ENCODE measurements at regions of chr10 and their contacts with region 1.

Region 1: DNA sequence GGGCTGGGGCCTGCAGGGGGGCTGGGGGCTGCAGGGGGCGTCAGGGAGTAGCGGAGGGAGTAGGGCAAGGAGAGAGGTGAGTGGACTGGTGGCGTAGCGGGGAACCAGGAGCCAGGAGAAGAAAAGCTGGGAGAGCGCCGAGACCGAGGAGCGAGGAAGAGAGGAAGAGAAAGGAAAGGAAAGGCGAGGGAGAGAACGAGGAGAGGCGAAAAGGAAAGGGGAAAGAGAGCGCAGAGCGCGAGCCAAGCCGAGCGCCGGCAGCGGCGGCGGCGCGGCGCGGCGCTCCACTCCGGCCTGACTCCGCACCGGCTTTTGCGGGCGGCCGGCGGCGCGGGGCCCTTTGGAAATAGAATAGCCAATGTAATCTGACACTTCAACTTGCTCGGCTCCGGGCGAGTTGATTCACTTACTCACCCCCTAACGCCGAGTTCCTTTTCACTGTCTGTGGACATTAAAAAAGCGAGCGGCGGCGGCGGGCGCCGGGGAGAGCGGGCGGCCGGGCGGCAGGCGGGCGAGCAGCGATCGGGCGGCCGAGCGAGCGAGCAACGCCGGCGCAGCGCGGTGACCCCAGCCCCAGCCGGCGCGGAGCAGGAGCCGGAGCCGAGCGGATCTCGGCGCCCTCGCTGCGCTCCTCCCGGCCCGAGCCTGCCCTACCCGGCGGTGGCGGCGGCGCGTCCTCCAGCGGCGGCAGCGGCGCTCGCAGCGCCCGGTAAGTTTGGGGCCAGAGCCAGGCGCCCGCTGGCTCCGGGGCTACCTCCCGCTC is at the start of gene ZMIZ1:
- DNase-seq: peak; percentile 94
- ATAC-seq: peak; percentile 73
- H3K4me3 ChIP-seq: peak within 1 kb of the TSS; percentile 88 to 97
- H3K27ac ChIP-seq: peak within 1 kb of the TSS; percentile 73 to 94
- H3K4me1 ChIP-seq: peaks cover 0 to 2% of the 10 kb centered on the region in 2 donors
- H3K27me3 ChIP-seq: no peaks in the 10 kb centered on the region
- total RNA-seq, gene ZMIZ1: 48.5 to 84.1 TPM

Region 2: GRCh38 chr10:78211561-78212051 is 857.1 kb before region 1 on chr10:
- intact Hi-C with region 1: loop called (anchors 5 to 10 kb)
- DNase-seq: peak in 1 of 2 donors; percentile 65
- ATAC-seq: no peak
- H3K4me3 ChIP-seq: no peak overlapping the region
- H3K27ac ChIP-seq: no peak overlapping the region
- H3K4me1 ChIP-seq: no peaks in the 10 kb centered on the region
- H3K27me3 ChIP-seq: no peaks in the 10 kb centered on the region

Region 3: DNA sequence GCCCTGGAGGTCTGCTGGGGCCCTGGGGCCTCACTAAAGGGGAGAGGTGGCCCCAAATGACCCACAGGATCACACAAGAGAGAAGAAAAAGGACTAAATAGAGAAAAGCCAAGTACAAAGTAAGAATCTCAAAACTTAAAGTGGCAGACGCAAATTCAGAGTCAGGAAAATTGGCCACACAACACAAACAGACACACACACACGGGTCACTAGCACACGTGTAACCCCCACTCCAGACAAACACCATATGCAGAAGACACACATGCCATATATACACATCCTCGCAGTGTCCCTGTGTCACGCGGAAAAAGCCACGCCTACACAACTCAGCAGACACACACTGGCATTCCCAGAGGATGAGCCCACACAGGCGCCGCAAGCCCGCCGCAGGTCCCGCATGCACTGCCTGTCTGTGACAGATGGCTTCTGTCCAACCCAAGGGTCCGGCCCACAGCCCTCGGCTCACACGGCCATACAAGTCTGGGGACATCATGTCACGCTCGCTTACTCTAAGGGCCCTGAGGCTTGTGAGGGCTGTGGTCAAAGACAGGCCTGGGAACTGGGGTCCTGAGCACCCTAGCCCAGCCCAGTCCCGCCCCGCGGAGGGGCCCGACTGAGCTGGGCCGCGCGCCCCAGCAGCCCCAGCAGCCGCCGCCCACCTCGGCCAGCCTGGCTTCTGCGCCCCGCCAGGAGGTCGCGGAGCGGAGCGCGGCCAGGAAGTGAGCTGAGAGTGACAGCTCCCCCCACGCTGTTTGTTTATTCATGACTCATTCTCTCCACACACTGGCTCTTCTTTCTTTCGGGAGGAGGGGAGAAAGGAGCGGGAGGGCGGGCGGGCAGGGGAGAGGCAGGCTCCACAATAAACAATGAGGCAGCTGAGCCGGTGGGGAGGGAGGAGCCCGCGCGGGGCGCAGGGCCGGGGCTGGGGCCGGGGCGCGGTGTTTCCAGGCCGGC is 95.5 kb before region 1 on chr10:
- intact Hi-C with region 1: loop called (anchors 2 to 5 kb)
- DNase-seq: peak; percentile 90 to 91
- ATAC-seq: peak; percentile 72
- H3K4me3 ChIP-seq: peak overlapping the region; percentile 17 to 45
- H3K27ac ChIP-seq: peak overlapping the region; percentile 78 to 88
- H3K4me1 ChIP-seq: peaks cover 0 to 3% of the 10 kb centered on the region in 2 donors
- H3K27me3 ChIP-seq: no peaks in the 10 kb centered on the region

Region 4: GRCh38 chr10:79022565-79023230 is 46.0 kb before region 1 on chr10:
- intact Hi-C with region 1: no loop called
- DNase-seq: peak; percentile 47 to 70
- ATAC-seq: no peak
- H3K4me3 ChIP-seq: no peak overlapping the region
- H3K27ac ChIP-seq: no peak overlapping the region
- H3K4me1 ChIP-seq: no peaks in the 10 kb centered on the region
- H3K27me3 ChIP-seq: no peaks in the 10 kb centered on the region

Region 5: GRCh38 chr10:79149662-79150443 is 81.1 kb after region 1 on chr10:
- intact Hi-C with region 1: loop called (anchors 2 to 5 kb)
- DNase-seq: peak; percentile 85 to 88
- ATAC-seq: peak; percentile 55
- H3K4me3 ChIP-seq: no peak overlapping the region
- H3K27ac ChIP-seq: peak overlapping the region in 1 of 2 donors; percentile 0
- H3K4me1 ChIP-seq: peaks cover 0 to 11% of the 10 kb centered on the region in 2 donors
- H3K27me3 ChIP-seq: no peaks in the 10 kb centered on the region

Region 6: DNA sequence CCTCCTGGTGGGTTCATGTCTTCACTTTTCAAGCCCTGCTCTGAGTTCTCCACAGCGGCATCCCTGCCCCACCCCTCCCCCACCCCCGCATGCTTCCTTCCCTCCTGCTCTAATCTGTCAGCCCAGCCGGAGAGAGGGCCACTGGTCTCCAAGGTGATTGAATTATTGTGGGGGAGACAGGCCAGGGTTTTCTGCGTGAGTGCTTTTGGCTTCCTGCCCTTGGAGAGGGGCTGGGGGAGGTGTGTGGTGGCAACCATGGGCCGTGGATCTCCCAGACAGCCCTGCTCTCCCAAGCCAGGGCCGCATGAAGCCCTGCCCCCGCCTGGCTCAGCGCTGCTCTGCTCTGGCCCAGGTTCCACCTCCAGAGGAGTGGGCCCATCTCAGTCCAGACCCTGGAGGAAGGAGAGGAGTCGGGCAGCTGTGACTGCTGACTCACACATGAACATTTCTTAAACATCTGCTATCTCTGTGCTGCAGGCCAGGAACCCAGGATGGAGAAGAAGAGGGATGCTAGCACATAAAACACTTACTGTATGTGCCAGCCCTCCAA is 109.9 kb after region 1 on chr10:
- intact Hi-C with region 1: loop called in 1 of 2 experiments (anchors 5 kb)
- DNase-seq: no peak
- ATAC-seq: no peak
- H3K4me3 ChIP-seq: no peak overlapping the region
- H3K27ac ChIP-seq: no peak overlapping the region
- H3K4me1 ChIP-seq: no peaks in the 10 kb centered on the region
- H3K27me3 ChIP-seq: no peaks in the 10 kb centered on the region